Activated B cell treated with CpG ODN at 0.5 μM for 24 hours (primary cell): ENCODE measurements at regions of chr15 and their contacts with region 1.

Region 1: DNA sequence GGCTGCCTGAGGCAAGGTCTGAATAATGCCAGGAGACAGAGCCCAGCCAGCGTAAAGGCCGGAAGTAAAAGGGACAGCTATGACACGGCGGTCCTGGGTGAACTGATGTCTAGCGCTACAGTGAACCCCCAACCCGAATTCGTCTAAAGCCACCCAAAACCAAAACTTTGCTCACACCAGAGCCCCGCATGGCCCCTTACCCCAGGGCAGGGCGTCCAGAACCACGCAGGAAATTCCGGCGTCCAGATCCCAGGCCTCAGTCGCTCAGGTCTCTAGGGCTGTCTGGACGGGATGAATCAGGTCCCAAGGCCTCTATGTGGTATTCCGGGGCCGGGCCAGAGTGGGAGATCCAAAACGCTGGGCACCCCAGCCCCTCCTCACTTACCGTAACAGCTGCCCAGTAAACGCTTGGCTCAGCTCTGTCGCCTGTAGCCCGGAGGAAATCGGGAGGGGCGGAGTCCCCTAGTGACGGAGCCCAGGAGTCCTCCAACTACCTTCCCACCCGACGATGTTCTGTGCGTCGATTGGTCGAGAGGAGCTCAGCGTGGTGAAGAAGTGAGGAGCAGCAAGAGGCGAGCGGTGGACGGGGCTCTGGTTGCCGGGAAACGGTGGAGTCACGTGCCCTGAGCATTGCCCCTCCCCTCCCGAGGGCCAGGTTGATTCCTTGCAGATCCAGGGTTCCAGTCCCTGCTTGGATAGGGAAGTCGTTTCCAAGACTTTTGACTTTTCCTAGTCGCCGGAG is at the start of gene CCDC32:
- DNase-seq: peak; percentile 81
- ATAC-seq: peak; percentile 91
- H3K4me3 Mint-ChIP-seq: peak within 1 kb of the TSS; percentile 97
- H3K27ac Mint-ChIP-seq: peak within 1 kb of the TSS; percentile 94
- H3K4me1 Mint-ChIP-seq: peaks cover 71% of the 10 kb centered on the region
- H3K27me3 Mint-ChIP-seq: no peaks in the 10 kb centered on the region
- CTCF ChIP-seq: no peak
- total RNA-seq, gene CCDC32: 64.0 and 66.3 TPM in 2 replicates

Region 2: GRCh38 chr15:40440743-40441564 is 123.8 kb before region 1 on chr15 and contains the start of gene BAHD1:
- CTCF ChIA-PET with region 1: no interaction called
- POLR2A ChIA-PET with region 1: no interaction called
- intact Hi-C with region 1: loop called (anchors 5 kb)
- DNase-seq: peak; percentile 93
- ATAC-seq: peak; percentile 92
- H3K4me3 Mint-ChIP-seq: peak within 1 kb of the TSS; percentile 88
- H3K27ac Mint-ChIP-seq: peak within 1 kb of the TSS; percentile 68
- H3K4me1 Mint-ChIP-seq: peaks cover 59% of the 10 kb centered on the region
- H3K27me3 Mint-ChIP-seq: peaks cover 22% of the 10 kb centered on the region
- CTCF ChIP-seq: no peak
- total RNA-seq, gene BAHD1: 27.5 and 28.4 TPM in 2 replicates

Region 3: GRCh38 chr15:40525855-40526254 is 38.9 kb before region 1 on chr15:
- CTCF ChIA-PET with region 1: interaction called, 10 read pairs
- POLR2A ChIA-PET with region 1: interaction called, 5 read pairs
- intact Hi-C with region 1: no loop called
- DNase-seq: no peak
- ATAC-seq: no peak
- H3K4me3 Mint-ChIP-seq: no peak overlapping the region
- H3K27ac Mint-ChIP-seq: no peak overlapping the region
- H3K4me1 Mint-ChIP-seq: no peaks in the 10 kb centered on the region
- H3K27me3 Mint-ChIP-seq: no peaks in the 10 kb centered on the region
- CTCF ChIP-seq: no peak

Region 4: GRCh38 chr15:40550341-40551037 is 14.3 kb before region 1 on chr15:
- CTCF ChIA-PET with region 1: interaction called, 6 read pairs
- POLR2A ChIA-PET with region 1: interaction called, 32 read pairs
- intact Hi-C with region 1: loop called (anchors 1 kb)
- DNase-seq: no peak
- ATAC-seq: peak; percentile 84
- H3K4me3 Mint-ChIP-seq: peak overlapping the region; percentile 76
- H3K27ac Mint-ChIP-seq: peak overlapping the region; percentile 93
- H3K4me1 Mint-ChIP-seq: peaks cover 92% of the 10 kb centered on the region
- H3K27me3 Mint-ChIP-seq: no peaks in the 10 kb centered on the region
- CTCF ChIP-seq: no peak

Region 5: DNA sequence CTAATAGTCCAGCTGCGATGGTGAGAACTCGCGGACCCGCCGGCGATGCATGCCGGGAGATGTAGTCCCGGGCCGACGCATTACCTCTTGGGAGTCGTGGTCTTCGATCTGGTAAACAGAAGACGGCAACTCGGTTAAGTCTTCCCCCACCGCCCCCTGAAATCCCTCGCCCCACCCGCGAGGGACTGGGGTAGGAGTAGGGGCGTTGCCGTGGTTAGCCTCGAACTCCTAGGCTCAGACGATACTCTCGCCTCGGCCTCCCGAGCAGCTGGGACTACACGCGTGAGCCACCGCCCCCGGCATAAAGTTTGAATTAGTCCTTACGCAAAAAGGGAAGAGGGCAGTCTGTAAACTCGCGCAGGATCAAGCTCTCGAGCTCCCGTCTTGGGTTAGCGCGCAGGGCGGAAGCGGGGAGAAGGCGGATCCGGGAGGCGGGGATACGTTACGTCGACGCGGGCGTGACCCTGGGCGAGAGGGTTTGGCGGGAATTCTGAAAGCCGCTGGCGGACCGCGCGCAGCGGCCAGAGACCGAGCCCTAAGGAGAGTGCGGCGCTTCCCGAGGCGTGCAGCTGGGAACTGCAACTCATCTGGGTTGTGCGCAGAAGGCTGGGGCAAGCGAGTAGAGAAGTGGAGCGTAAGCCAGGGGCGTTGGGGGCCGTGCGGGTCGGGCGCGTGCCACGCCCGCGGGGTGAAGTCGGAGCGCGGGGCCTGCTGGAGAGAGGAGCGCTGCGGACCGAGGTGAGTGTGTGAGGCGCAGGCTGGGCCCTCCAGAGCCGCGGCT is 130.1 kb after region 1 on chr15 and contains the start of gene RAD51:
- CTCF ChIA-PET with region 1: no interaction called
- POLR2A ChIA-PET with region 1: interaction called, 20 read pairs
- intact Hi-C with region 1: no loop called
- DNase-seq: peak; percentile 88
- ATAC-seq: peak; percentile 90
- H3K4me3 Mint-ChIP-seq: peak within 1 kb of the TSS; percentile 99
- H3K27ac Mint-ChIP-seq: peak within 1 kb of the TSS; percentile 98
- H3K4me1 Mint-ChIP-seq: peaks cover 25% of the 10 kb centered on the region
- H3K27me3 Mint-ChIP-seq: no peaks in the 10 kb centered on the region
- CTCF ChIP-seq: no peak
- total RNA-seq, gene RAD51: 2.6 and 4.1 TPM in 2 replicates

Region 6: DNA sequence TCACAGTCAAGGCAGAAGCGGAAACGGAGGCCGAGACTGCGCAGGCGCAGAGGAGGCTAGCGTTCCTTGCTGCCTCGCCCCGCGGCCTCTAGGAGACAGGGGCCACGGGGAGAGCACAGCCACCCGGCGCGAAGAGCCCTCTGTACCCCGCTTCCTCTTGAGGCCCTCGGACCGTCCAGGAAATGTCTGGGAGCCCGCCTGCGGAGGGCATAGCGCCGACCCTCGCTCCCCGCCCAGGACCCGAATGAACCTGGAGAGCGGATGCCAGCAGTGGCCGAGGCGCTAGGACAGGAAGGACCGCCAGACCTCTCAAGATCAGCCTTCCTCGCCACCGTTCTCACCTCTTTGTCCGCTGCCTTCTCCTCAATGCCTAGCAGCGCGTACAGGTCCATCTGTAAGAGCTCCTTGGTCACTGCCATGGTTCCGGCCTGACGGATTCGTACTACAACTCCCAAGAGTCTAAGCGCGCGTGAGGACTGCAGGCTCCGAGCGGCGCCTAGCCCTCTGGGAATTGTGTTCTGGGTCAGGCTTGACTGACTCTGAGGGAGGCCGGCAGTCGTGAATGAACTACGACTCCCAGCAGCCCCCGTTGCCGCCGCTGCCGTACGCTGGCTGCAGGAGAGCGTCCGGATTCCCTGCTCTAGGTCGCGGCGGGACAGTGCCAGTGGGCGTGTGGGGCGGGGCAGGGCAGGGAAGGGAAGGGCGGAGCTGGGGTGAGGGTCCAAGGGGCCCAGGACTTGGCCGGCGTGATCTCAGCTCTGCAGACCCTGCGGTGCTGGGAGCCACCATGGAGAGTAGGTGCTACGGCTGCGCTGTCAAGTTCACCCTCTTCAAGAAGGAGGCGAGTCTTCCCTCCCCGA is 242.5 kb after region 1 on chr15 and contains the starts of genes DNAJC17 and ZFYVE19:
- CTCF ChIA-PET with region 1: no interaction called
- POLR2A ChIA-PET with region 1: interaction called, 5 read pairs
- intact Hi-C with region 1: loop called (anchors 1 kb)
- DNase-seq: peak; percentile 87
- ATAC-seq: peak; percentile 96
- H3K4me3 Mint-ChIP-seq: peak within 1 kb of the TSS; percentile 99
- H3K27ac Mint-ChIP-seq: peak within 1 kb of the TSS; percentile 100
- H3K4me1 Mint-ChIP-seq: peaks cover 24% of the 10 kb centered on the region
- H3K27me3 Mint-ChIP-seq: no peaks in the 10 kb centered on the region
- CTCF ChIP-seq: no peak
- total RNA-seq, gene DNAJC17: 43.1 and 51.0 TPM in 2 replicates
- total RNA-seq, gene ZFYVE19: 23.2 and 25.2 TPM in 2 replicates